ENCODE measurements at regions of chr3 and their contacts with region 1.

Region 1: DNA sequence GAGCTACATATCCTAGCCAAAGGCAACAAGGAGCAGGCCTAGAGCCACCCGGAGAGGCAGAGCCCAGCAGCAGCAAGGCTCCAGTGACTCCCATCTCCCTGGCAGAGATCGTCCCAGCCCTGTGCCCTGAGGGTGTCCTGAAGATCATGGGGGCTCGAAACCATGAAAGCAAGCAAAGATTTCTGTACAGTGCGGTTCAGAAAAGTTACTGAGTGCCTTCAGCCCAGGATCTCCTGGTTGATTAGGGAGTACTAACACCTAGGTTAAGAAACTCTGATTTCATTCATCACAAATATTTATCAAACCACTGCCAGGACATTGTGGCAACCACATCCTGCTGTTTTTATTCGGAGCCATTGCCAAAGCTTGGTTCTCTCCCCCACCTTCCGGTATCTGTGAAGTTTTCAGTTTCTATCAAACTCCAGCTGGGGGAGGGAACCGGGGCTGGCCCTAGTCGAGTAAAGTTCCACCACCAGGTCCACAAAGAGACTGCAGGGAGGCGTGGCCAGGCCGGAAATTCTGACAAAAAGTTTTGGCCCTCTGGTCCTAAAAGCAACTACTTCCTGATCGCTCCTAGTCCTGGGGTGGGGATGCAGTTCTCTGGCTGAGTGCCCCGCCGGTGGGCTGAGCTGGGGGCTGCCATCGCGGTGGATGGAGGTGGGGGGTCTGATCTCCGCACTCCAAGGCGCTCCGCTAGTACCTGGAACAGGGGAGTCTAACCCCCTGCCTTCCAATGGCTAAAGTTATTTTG is 1.2 kb downstream of the RAB43 start:
- DNase-seq: peak; percentile 81 to 94 (median 93)
- H3K4me3 ChIP-seq: peak overlapping the region; percentile 93
- H3K4me3 Mint-ChIP-seq: peak overlapping the region; percentile 83 to 95 (median 90)
- H3K27ac ChIP-seq: peak overlapping the region; percentile 80
- H3K27ac Mint-ChIP-seq: peak overlapping the region; percentile 87 to 98 (median 96)
- H3K4me1 ChIP-seq: peaks cover 45% of the 10 kb centered on the region
- H3K4me1 Mint-ChIP-seq: peaks cover 60 to 65% (median 62%) of the 10 kb centered on the region in 3 donors
- H3K27me3 ChIP-seq: no peaks in the 10 kb centered on the region
- H3K27me3 Mint-ChIP-seq: no peaks in the 10 kb centered on the region

Region 2: DNA sequence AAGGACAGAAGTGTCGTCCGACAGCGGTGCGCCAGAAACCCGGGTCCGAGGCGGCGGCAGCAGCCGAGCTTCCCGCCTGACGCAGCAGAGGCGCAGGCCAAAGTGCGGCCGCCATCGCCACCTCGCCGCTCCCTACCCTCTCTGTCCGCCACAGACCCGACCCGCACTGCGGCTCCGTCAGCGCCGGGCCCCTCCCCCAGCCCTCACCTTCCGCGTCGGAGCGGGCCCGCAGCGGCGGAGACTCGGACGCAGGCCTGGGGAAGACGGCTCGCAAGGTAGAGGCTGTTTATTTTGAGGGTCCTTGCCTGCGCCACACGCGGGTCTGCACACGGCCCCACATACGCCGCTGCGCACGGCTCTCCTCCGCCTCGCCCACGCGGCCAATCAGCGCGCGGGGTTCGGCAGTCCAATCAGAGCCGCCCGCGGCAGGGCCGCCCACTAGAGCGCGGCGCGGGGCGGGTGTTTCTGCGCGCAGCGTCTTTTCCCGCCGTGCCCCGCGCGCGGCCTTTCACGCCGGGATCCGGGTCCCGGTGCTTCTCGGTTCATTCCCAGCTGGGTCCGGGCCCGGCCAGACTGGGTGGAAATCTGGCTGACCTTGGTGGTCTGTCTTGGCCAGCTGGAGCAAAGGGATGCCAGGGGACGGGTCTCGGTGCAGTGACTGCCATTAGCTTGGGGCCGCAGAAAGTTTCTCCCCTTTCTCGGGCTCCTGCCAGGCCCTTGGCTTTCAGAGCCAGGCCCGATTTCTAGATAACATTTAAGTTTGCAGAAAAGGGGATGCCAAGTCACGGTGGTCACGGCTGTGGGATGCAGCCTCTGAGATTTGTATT is 63.4 kb after region 1 on chr3 and contains the start of gene CNBP:
- CTCF ChIA-PET with region 1: interaction called, 4 read pairs
- POLR2A ChIA-PET with region 1: interaction called, 32 read pairs
- DNase-seq: peak; percentile 87 to 95 (median 93)
- H3K4me3 ChIP-seq: peak within 1 kb of the TSS; percentile 83
- H3K4me3 Mint-ChIP-seq: peak within 1 kb of the TSS; percentile 96 to 99 (median 97)
- H3K27ac ChIP-seq: peak within 1 kb of the TSS; percentile 98
- H3K27ac Mint-ChIP-seq: peak within 1 kb of the TSS; percentile 96 to 99 (median 98)
- H3K4me1 ChIP-seq: peaks cover 30% of the 10 kb centered on the region
- H3K4me1 Mint-ChIP-seq: peaks cover 38 to 49% (median 46%) of the 10 kb centered on the region in 3 donors
- H3K27me3 ChIP-seq: no peaks in the 10 kb centered on the region
- H3K27me3 Mint-ChIP-seq: no peaks in the 10 kb centered on the region
- total RNA-seq, gene CNBP: 474 to 487 TPM

Measured in CD8-positive, alpha-beta memory T cell (primary cell).